ENCODE measurements at regions of chr18 and their contacts with region 1.

Region 1: DNA sequence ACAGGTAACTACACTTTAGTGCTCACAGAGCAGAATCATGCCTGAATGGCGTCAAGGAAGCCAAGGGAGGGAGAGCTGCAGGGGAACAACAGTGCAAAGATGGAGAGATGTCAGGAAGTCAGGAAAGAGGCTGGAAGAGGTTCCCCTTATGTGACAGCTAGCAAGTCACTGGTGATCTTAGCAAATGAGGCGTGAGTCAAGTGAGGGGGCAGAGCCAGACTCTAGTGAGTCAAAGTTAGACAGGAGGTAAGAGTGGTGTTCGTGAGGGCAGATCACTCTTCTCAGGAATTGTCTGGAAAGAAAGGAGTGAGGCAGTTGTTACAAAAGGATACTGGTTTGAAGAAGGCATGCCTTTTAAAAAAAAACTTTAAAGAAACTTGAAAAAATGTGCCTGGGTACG is 87.1 kb downstream of the MEP1B start:
- DNase-seq: no peak
- H3K4me3 ChIP-seq: no peak overlapping the region
- H3K27ac ChIP-seq: no peak overlapping the region
- H3K4me1 ChIP-seq: no peaks in the 10 kb centered on the region
- H3K27me3 ChIP-seq: no peaks in the 10 kb centered on the region
- CTCF ChIP-seq: no peak

Region 2: DNA sequence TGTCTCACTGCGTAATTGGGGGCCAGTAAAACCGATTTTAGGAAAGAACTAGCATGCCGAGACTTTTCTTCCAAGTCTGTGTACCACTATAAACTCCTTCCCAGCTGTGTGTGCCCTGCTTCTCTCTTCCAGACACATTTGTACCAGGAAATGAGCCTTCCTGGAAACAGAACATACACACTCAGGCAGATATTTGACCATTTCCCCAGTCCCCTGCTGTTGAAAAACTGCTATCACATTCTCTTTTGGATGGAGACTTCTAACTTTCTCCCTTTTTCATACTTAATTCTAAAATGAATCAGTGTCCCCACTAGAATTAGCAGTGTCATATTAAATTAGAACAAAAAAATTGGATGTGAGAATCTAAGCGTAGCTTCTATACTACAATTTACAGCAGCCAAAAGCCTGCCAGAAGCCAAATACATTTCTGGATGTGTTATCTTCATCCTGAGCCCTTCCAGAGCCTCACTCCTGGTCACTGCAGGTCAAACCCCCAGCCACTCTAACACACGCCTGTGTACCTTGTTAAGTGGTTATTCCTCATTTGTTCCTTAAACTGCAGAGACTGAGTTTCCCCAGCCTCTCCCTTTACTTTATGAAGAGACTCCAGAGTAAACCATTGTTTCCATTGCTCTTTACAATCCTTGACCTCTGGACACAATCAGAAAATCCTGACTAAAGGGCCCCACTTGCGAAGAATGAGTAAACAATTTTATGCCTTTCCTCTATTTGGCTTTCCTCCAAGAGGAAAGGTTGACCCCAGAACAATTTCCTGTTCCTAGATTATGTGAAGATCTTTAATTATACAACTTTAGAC is 879.9 kb before region 1 on chr18:
- CTCF ChIA-PET with region 1: no interaction called
- dilution Hi-C with region 1: no loop called
- in situ Hi-C with region 1: no loop called
- intact Hi-C with region 1: no loop called
- DNase-seq: no peak
- H3K4me3 ChIP-seq: no peak overlapping the region
- H3K27ac ChIP-seq: no peak overlapping the region
- H3K4me1 ChIP-seq: peaks cover 4% of the 10 kb centered on the region
- H3K27me3 ChIP-seq: no peaks in the 10 kb centered on the region
- CTCF ChIP-seq: no peak

Region 3: DNA sequence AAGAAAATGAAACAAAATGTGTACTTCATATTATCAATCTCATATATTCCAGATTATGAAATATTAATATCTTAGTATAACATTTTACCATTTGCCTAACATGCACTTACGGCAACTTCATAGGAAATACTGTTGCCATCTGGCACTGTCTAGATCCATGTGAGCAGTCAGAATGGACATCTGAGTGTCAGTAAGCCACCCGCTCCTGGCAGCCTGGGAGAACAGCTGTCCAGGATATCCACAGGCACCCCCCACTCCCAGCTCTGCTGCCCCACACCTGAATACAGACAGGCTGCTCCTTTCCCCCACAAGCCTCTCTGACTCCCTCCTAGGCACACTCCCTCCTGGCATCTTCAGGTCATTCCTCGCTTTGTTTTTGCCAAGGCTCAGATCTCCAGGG is 66.7 kb after region 1 on chr18:
- CTCF ChIA-PET with region 1: no interaction called
- dilution Hi-C with region 1: loop called (anchors 5 kb)
- in situ Hi-C with region 1: no loop called
- intact Hi-C with region 1: no loop called
- DNase-seq: no peak
- H3K4me3 ChIP-seq: no peak overlapping the region
- H3K27ac ChIP-seq: no peak overlapping the region
- H3K4me1 ChIP-seq: no peaks in the 10 kb centered on the region
- H3K27me3 ChIP-seq: no peaks in the 10 kb centered on the region
- CTCF ChIP-seq: no peak